ENCODE measurements at regions of chr1 and their contacts with region 1.

Region 1: DNA sequence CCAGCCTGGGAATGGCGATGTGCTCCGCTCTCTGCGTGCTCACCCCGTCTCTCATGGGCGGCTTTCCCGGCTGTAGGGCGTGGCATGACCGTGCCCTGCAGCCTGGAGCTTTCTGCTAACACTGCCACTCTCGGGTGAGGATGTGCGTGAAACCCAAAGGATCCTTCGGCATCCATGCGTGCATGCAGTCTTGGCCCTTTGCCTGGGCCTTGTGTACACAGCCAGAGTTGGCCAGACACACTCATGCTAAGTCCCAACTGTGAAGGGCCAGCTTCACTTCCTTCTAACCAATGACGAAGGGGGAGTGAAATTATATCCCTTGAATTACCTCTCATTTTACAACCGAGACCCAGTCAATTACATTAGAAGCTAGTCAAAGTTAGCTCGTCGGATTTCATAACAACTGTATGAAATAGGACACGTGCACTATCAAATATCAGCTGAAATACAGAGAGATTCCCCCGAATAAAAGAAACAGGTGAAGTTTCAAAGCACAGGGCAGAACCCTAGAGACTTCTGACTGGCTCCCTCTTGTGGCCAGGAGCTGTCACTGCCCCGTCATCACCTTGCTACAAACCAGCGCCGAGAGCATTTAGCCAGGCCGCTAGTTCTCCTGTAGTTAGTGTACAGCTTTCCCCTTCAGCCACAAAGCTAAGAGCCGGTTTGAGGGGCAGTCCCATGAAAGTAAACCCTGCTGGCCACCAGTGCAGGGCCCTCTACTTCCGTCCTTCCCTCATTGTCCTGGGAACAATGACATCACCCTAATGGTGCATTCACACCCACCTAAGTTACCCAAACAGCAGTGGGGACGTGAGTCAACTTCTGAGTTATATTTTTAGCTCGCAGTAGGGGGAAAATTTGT is 63.4 kb upstream of the COA6 start:
- H3K4me3 ChIP-seq: no peak overlapping the region
- H3K27ac ChIP-seq: no peak overlapping the region
- H3K4me1 ChIP-seq: no peaks in the 10 kb centered on the region
- CTCF ChIP-seq: peak; percentile 86

Region 2: GRCh38 chr1:234135501-234135900 is 174.3 kb before region 1 on chr1:
- CTCF ChIA-PET with region 1: interaction called, 19 read pairs
- POLR2A ChIA-PET with region 1: no interaction called
- H3K4me3 ChIP-seq: no peak overlapping the region
- H3K27ac ChIP-seq: no peak overlapping the region
- H3K4me1 ChIP-seq: no peaks in the 10 kb centered on the region
- CTCF ChIP-seq: no peak

Region 3: GRCh38 chr1:234188454-234188792 is 121.4 kb before region 1 on chr1:
- CTCF ChIA-PET with region 1: interaction called, 11 read pairs
- POLR2A ChIA-PET with region 1: no interaction called
- H3K4me3 ChIP-seq: no peak overlapping the region
- H3K27ac ChIP-seq: no peak overlapping the region
- H3K4me1 ChIP-seq: no peaks in the 10 kb centered on the region
- CTCF ChIP-seq: no peak

Region 4: GRCh38 chr1:234246638-234247116 is 63.2 kb before region 1 on chr1:
- CTCF ChIA-PET with region 1: interaction called, 14 read pairs
- POLR2A ChIA-PET with region 1: no interaction called
- H3K4me3 ChIP-seq: no peak overlapping the region
- H3K27ac ChIP-seq: no peak overlapping the region
- H3K4me1 ChIP-seq: no peaks in the 10 kb centered on the region
- CTCF ChIP-seq: no peak

Region 5: GRCh38 chr1:234295068-234295467 is 14.8 kb before region 1 on chr1:
- CTCF ChIA-PET with region 1: interaction called, 40 read pairs
- POLR2A ChIA-PET with region 1: no interaction called
- H3K4me3 ChIP-seq: no peak overlapping the region
- H3K27ac ChIP-seq: no peak overlapping the region
- H3K4me1 ChIP-seq: no peaks in the 10 kb centered on the region
- CTCF ChIP-seq: no peak

Measured in HEK293 (cell line).